Heart right ventricle (tissue), 16 donors: ENCODE measurements at regions of chr5 and their contacts with region 1.

Region 1: GRCh38 chr5:74684900-74685851 is at the start of gene HEXB:
- DNase-seq: peak; percentile 91 to 92
- ATAC-seq: peak; percentile 97 to 99 (median 99)
- H3K4me3 ChIP-seq: peak within 1 kb of the TSS; percentile 77 to 97 (median 92)
- H3K27ac ChIP-seq: peak within 1 kb of the TSS; percentile 79 to 95 (median 88)
- H3K4me1 ChIP-seq: peaks cover 0 to 36% (median 23%) of the 10 kb centered on the region in 9 donors
- H3K27me3 ChIP-seq: no peaks in the 10 kb centered on the region
- CTCF ChIP-seq: peak in 2 of 9 donors; percentile 2 to 14
- total RNA-seq, gene HEXB: 79.4 to 225 (median 115) TPM

Region 2: GRCh38 chr5:74640450-74640953 is 44.7 kb before region 1 on chr5 and contains the start of gene ENC1:
- intact Hi-C with region 1: no loop called
- DNase-seq: peak; percentile 87 to 89
- ATAC-seq: peak; percentile 85 to 95 (median 89)
- H3K4me3 ChIP-seq: peak within 1 kb of the TSS; percentile 36 to 89 (median 81)
- H3K27ac ChIP-seq: peak within 1 kb of the TSS; percentile 61 to 97 (median 92)
- H3K4me1 ChIP-seq: peaks cover 5 to 67% (median 43%) of the 10 kb centered on the region in 9 donors
- H3K27me3 ChIP-seq: no peaks in the 10 kb centered on the region
- CTCF ChIP-seq: peak; percentile 44 to 70 (median 60)
- total RNA-seq, gene ENC1: 2.8 to 9.1 (median 4.0) TPM

Region 3: GRCh38 chr5:75717082-75717922 is 1032.1 kb after region 1 on chr5 and contains the start of gene POC5:
- intact Hi-C with region 1: loop called in 1 of 10 experiments (anchors 10 kb)
- DNase-seq: peak; percentile 96 to 97
- ATAC-seq: peak; percentile 99 to 100 (median 99)
- H3K4me3 ChIP-seq: peak within 1 kb of the TSS; percentile 70 to 95 (median 78)
- H3K27ac ChIP-seq: peak within 1 kb of the TSS; percentile 63 to 95 (median 84)
- H3K4me1 ChIP-seq: peaks cover 0 to 16% (median 11%) of the 10 kb centered on the region in 9 donors
- H3K27me3 ChIP-seq: no peaks in the 10 kb centered on the region
- CTCF ChIP-seq: no peak
- total RNA-seq, gene POC5: 2.6 to 5.5 (median 3.8) TPM